Aorta (tissue), 5 donors: ENCODE measurements at regions of chr9 and their contacts with region 1.

Region 1: GRCh38 chr9:120755827-120756434 is 37.3 kb downstream of the FBXW2 start:
- DNase-seq: no peak
- ATAC-seq: peak; percentile 78
- H3K4me3 ChIP-seq: no peak overlapping the region
- H3K27ac ChIP-seq: peak overlapping the region in 1 of 2 donors; percentile 2
- H3K4me1 ChIP-seq: no peaks in the 10 kb centered on the region
- H3K27me3 ChIP-seq: no peaks in the 10 kb centered on the region

Region 2: DNA sequence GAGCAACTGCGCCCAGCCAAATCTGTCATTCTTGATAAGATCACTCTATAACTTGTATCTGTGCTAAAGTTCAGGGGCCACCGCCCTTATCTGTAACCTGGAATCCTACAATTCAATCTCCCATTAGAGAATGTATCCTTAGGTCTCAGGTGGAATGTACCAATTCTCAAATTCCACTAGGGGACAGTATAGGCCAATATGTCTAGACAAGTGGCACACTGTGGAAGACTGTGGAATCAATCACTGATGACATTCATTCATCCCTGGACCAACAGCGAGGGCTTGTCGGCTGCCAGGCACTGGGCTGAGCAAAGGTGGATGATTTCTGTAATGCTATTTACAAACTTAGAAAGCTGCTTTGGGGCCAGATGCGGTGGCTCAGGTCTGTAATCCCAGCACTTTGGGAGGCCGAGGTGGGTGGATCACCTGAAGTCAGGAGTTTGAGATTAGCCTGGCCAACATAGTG is 12.9 kb before region 1 on chr9:
- intact Hi-C with region 1: no loop called
- DNase-seq: no peak
- ATAC-seq: no peak
- H3K4me3 ChIP-seq: no peak overlapping the region
- H3K27ac ChIP-seq: no peak overlapping the region
- H3K4me1 ChIP-seq: no peaks in the 10 kb centered on the region
- H3K27me3 ChIP-seq: no peaks in the 10 kb centered on the region

Region 3: GRCh38 chr9:120985810-120986222 is 229.9 kb after region 1 on chr9:
- intact Hi-C with region 1: loop called in 1 of 2 experiments (anchors 10 kb)
- DNase-seq: no peak
- ATAC-seq: no peak
- H3K4me3 ChIP-seq: no peak overlapping the region
- H3K27ac ChIP-seq: no peak overlapping the region
- H3K4me1 ChIP-seq: peaks cover 0 to 2% of the 10 kb centered on the region in 2 donors
- H3K27me3 ChIP-seq: no peaks in the 10 kb centered on the region

Region 4: DNA sequence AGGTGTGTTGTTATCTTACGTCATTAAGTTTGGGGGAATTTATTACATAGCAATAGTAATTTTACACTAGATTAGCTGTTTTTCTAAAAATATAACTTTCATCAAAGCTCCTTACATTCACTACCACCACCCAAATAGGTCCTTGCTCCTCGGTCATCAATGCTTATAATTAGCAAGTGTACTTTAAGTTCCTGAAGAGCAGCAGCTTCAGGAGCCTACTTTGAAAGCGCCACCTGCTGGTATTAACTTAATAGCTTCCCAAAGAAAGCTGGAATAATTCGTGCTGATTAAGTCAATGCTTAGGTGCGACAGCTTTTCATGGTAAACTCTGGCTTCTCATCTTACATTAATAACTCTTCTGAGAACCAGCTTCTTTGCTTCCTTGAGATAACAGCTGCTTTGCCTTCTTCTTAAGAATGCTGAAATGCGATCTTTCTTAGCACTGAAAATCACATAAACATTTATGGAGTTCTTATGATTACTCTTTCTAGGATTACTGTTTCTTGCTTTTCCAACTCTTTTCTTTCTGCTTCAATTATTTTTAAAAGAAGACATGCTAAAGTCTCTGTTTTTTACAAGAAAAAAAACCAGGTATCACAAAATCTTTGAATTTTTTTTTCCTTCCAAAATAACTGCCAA is 304.2 kb after region 1 on chr9:
- intact Hi-C with region 1: loop called (anchors 2 to 5 kb)
- DNase-seq: no peak
- ATAC-seq: peak; percentile 72
- H3K4me3 ChIP-seq: no peak overlapping the region
- H3K27ac ChIP-seq: no peak overlapping the region
- H3K4me1 ChIP-seq: no peaks in the 10 kb centered on the region
- H3K27me3 ChIP-seq: no peaks in the 10 kb centered on the region